Mammary epithelial cell (primary cell): ENCODE measurements at regions of chr15 and their contacts with region 1.

Region 1: GRCh38 chr15:60421544-60421943 is 23.8 kb upstream of the ANXA2 start:
- DNase-seq: peak; percentile 63
- H3K4me3 ChIP-seq: no peak overlapping the region
- H3K27ac ChIP-seq: peak overlapping the region; percentile 99
- H3K4me1 ChIP-seq: peaks cover 53% of the 10 kb centered on the region
- H3K27me3 ChIP-seq: no peaks in the 10 kb centered on the region
- CTCF ChIP-seq: no peak

Region 2: DNA sequence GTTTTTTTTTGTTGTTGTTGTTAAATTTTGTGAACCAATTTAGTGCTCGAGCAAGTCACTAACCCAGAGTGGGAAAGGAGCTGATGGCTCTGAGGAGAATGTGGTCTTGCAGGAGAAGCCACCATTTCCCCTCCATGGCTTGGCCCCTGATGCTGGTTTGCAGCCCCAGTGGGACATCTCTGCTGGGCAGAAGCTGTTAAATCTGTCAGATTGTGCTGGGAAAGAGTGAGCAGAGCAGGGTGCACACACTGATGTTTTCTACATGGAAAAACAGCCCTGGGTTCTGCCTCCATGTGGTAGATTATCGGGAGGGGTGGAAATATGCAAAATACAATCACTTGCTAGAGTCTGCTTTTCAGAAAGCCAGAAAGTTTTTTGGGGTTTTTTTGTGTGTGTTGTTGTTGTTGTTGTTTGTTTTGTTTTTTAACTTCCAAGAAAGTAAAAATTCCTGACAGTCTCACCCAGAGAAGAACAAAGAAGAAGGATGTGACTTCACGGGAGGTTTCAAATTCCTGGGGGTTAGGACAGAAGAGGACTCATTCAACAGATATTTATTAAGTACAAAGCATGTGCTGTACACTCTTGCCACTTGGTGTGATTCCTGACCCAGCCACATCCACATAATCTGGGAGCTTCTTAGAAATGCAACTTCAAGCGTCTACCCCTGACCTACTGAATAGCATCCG is 283.7 kb before region 1 on chr15:
- CTCF ChIA-PET with region 1: no interaction called
- dilution Hi-C with region 1: no loop called
- in situ Hi-C with region 1: no loop called
- intact Hi-C with region 1: no loop called
- DNase-seq: peak; percentile 38
- H3K4me3 ChIP-seq: no peak overlapping the region
- H3K27ac ChIP-seq: peak overlapping the region; percentile 29
- H3K4me1 ChIP-seq: peaks cover 14% of the 10 kb centered on the region
- H3K27me3 ChIP-seq: no peaks in the 10 kb centered on the region
- CTCF ChIP-seq: no peak

Region 3: DNA sequence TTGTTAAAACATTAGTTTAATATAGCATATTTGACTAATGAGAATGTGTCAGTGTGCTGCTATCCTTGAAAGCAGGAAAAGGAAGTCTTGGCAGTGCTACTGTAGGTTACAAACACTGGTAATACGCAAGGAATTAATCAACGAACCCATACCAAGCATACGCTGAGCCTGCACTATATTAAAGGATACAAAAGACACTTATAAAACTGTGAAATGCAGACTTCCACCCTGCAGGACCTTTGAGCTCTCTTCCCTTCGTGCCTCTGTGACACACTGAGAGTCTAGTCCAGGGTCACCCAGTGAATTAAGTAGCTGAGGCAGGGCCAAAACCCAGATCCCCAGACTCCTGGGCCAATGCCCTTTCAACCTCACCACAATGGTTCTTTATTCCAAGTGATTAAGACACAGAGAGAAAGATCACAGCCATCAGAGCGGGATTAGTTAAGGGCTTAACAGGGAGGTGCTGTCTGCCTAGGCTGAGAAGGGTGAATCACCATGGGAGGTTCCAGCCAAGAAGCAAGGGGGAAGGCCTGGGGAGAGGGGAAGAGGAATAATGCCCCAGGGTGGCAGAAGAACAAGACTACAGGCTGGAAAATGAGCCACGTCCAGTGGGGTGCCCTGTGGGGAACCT is 30.6 kb before region 1 on chr15:
- CTCF ChIA-PET with region 1: no interaction called
- dilution Hi-C with region 1: no loop called
- in situ Hi-C with region 1: no loop called
- intact Hi-C with region 1: no loop called
- DNase-seq: peak; percentile 92
- H3K4me3 ChIP-seq: peak overlapping the region in 2 of 3 experiments; percentile 12 to 34
- H3K27ac ChIP-seq: peak overlapping the region; percentile 97
- H3K4me1 ChIP-seq: peaks cover 67% of the 10 kb centered on the region
- H3K27me3 ChIP-seq: no peaks in the 10 kb centered on the region
- CTCF ChIP-seq: no peak

Region 4: GRCh38 chr15:60408438-60409105 is 13.0 kb before region 1 on chr15:
- CTCF ChIA-PET with region 1: interaction called, 7 read pairs
- dilution Hi-C with region 1: no loop called
- in situ Hi-C with region 1: no loop called
- intact Hi-C with region 1: loop called (anchors 1 kb)
- DNase-seq: peak; percentile 98
- H3K4me3 ChIP-seq: peak overlapping the region in 1 of 3 experiments; percentile 28
- H3K27ac ChIP-seq: peak overlapping the region; percentile 100
- H3K4me1 ChIP-seq: peaks cover 37% of the 10 kb centered on the region
- H3K27me3 ChIP-seq: no peaks in the 10 kb centered on the region
- CTCF ChIP-seq: no peak